ENCODE measurements at regions of chr10 and their contacts with region 1.

Region 1: DNA sequence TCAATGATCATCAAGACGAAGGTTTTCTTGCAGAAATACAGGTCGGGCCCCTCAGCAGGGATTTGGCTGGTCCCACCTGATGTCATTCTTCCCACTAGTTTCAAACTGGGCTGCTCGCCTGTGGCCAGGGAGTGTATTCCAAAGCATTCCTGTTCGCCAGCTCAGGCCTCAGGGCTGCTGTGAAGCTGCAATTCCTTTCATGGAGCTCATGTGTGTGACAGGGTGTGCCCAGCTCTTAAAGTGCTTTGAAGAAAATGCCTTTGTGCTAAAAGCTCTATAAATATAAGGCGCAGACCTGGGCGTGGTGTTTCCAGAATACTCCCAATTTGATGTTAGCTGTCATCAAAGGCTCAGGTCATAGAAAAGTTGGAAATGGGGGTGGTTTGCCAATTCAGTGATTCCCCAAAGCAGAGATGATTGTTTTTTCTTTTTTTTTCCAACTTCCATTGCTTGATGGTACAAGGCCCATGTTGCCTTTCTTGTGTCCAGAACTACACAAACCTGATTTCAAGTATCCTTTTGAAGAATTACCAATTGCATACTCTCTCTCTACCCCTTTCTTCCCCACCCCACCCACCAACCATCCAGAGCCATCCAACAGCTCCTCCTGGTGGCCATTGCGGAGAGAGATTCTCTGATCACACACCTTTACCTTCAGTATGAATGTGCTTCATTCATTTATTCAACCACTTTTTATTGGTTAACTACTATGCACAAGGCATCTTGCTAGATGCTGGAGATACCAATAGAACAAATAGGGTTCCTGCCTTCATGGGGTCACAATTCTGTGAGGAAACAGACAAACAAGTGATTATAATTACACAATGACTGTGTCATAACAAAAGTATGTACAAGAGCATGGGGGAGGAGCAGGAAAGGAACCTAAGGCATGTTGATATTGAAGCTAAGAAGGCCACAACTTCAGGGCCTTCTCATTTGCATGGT is 297.3 kb upstream of the LYZL1 start:
- DNase-seq: peak; percentile 42 to 68 (median 61)
- H3K4me3 ChIP-seq: no peak overlapping the region
- H3K27ac ChIP-seq: no peak overlapping the region
- H3K4me1 ChIP-seq: no peaks in the 10 kb centered on the region
- H3K27me3 ChIP-seq: no peaks in the 10 kb centered on the region

Region 2: GRCh38 chr10:28663576-28664313 is 327.9 kb before region 1 on chr10:
- CTCF ChIA-PET with region 1: interaction called, 62 read pairs
- POLR2A ChIA-PET with region 1: no interaction called
- DNase-seq: peak; percentile 73 to 87 (median 85)
- H3K4me3 ChIP-seq: no peak overlapping the region
- H3K27ac ChIP-seq: no peak overlapping the region
- H3K4me1 ChIP-seq: peaks cover 0 to 7% (median 5%) of the 10 kb centered on the region in 4 experiments
- H3K27me3 ChIP-seq: peaks cover 0 to 38% (median 15%) of the 10 kb centered on the region in 5 experiments

Region 3: DNA sequence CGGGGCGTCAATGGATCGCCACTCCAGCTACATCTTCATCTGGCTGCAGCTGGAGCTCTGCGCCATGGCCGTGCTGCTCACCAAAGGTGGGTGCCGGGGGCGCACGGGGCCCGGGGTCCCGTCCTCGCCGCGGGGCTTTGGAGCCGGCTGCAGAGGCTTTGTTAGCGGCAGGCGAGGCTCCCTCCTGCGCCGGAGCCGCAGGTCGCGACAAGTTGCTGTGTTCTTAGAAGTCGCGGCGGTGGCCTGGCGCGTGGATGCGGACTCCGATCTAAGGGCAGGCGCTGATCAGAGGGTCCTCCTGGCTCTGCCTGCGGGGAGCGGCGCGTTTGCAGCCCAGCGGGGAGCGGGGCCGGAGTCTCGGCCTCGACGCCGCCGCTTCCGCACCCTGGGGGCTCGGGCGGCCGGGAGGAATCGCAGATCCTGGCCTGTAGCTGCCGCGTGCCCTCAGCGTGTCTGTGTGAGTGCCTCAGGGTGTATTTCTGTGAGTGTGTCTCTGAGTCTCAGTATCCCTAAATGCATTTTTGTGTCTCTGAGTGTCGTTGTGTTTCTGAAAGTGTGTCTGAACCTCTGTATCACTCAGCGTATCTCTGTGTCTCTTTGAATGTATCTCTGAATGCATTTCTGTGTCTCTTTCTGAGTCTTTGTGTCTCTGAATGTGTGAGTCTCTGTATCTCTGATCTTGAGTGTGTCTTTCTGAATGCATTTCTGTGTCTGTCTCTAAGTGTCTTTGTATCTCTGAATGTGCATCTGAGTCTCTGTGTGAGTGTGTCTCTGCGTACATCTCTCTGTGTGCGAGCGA is 313.5 kb before region 1 on chr10:
- CTCF ChIA-PET with region 1: interaction called, 12 read pairs
- POLR2A ChIA-PET with region 1: no interaction called
- DNase-seq: peak in 2 of 3 donors; percentile 27 to 48
- H3K4me3 ChIP-seq: peak overlapping the region; percentile 36 to 80 (median 65)
- H3K27ac ChIP-seq: no peak overlapping the region
- H3K4me1 ChIP-seq: peaks cover 14 to 43% (median 35%) of the 10 kb centered on the region in 4 experiments
- H3K27me3 ChIP-seq: peaks cover 15 to 86% (median 53%) of the 10 kb centered on the region in 5 experiments

Region 4: DNA sequence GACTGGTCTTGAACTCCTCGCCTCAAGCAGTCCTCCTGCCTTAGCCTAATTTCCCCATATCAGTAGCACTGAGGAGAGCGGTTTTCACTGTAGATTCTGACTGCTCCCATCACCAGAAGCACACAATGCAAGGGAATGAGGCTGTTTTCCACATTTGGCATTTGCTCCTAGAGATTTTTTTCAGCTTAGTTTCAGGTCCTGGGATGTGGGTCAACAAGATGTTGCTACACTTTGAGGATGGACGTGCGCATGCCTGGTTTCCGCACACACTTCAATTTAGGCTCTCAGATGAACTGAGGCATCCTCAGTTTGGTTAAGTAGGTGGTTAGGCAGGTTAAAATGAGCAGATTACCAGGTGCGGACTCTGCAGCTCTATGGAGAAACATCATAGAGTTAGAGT is 10.2 kb after region 1 on chr10:
- CTCF ChIA-PET with region 1: interaction called, 11 read pairs
- POLR2A ChIA-PET with region 1: no interaction called
- DNase-seq: no peak
- H3K4me3 ChIP-seq: no peak overlapping the region
- H3K27ac ChIP-seq: no peak overlapping the region
- H3K4me1 ChIP-seq: no peaks in the 10 kb centered on the region
- H3K27me3 ChIP-seq: peaks cover 0 to 2% (median 0%) of the 10 kb centered on the region in 5 experiments

Region 5: GRCh38 chr10:29486433-29486832 is 494.8 kb after region 1 on chr10:
- CTCF ChIA-PET with region 1: no interaction called
- POLR2A ChIA-PET with region 1: no interaction called
- DNase-seq: no peak
- H3K4me3 ChIP-seq: no peak overlapping the region
- H3K27ac ChIP-seq: no peak overlapping the region
- H3K4me1 ChIP-seq: peaks cover 0 to 10% (median 5%) of the 10 kb centered on the region in 4 experiments
- H3K27me3 ChIP-seq: no peaks in the 10 kb centered on the region

Measured in common myeloid progenitor, CD34-positive (primary cell).